Naive thymus-derived CD4-positive, alpha-beta T cell (primary cell): ENCODE measurements at regions of chr2 and their contacts with region 1.

Region 1: GRCh38 chr2:12116228-12116750 is 369.9 kb downstream of the LPIN1 start:
- DNase-seq: no peak
- ATAC-seq: no peak
- H3K4me3 ChIP-seq: no peak overlapping the region
- H3K4me3 Mint-ChIP-seq: no peak overlapping the region
- H3K27ac ChIP-seq: no peak overlapping the region
- H3K27ac Mint-ChIP-seq: no peak overlapping the region
- H3K4me1 ChIP-seq: peaks cover 0 to 2% of the 10 kb centered on the region in 2 donors
- H3K4me1 Mint-ChIP-seq: peaks cover under 1 to 34% (median 27%) of the 10 kb centered on the region in 7 donors
- H3K27me3 ChIP-seq: no peaks in the 10 kb centered on the region
- H3K27me3 Mint-ChIP-seq: peaks cover 0 to 5% (median 0%) of the 10 kb centered on the region in 5 donors

Region 2: DNA sequence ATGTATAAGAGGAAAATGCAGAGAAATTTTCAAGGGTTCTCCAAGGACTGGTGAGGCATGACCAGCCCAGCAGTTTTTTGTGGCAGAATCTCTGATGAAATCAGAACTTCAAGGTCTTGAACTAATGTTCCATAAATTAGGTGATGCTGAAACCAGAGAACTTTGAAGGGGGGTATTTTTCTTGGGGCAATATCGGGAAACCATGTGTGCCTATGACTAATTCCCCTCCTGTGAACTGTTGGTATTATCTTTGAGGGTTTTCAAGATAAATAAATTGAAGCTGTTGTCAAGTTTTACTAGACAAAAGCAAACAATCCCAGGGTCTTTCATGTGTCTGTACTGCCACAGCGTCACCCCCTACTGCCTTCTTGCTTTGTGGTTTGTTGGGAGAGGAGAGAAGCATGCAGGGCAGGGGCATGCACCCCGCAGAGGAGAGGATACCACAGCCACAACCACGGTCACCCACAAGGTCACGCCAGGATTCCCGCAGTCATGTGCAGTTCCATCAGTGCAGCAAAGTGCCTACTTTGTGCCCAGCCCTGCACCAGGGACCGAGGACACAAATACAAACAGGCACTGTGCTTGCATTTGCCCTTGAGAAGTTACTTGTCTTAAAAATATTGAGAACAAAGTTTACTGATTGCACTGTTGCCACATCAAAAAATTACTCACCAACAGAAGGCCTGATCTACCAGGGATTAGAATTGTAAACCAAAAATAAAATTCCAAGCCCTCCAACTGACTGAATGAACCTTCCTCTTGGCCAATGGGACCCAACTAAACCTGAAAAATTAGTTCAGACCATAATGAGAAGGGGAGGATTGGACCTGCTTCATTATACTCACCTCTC is 187.1 kb after region 1 on chr2:
- CTCF ChIA-PET with region 1: no interaction called
- POLR2A ChIA-PET with region 1: no interaction called
- intact Hi-C with region 1: loop called in 1 of 2 experiments (anchors 10 kb)
- DNase-seq: peak in 1 of 9 donors; percentile 19
- ATAC-seq: peak; percentile 57
- H3K4me3 ChIP-seq: no peak overlapping the region
- H3K4me3 Mint-ChIP-seq: peak overlapping the region; percentile 20 to 65 (median 44)
- H3K27ac ChIP-seq: no peak overlapping the region
- H3K27ac Mint-ChIP-seq: peak overlapping the region in 7 of 9 donors; percentile 2 to 87 (median 73)
- H3K4me1 ChIP-seq: peaks cover 7 to 34% of the 10 kb centered on the region in 2 donors
- H3K4me1 Mint-ChIP-seq: peaks cover 5 to 51% (median 38%) of the 10 kb centered on the region in 7 donors
- H3K27me3 ChIP-seq: no peaks in the 10 kb centered on the region
- H3K27me3 Mint-ChIP-seq: no peaks in the 10 kb centered on the region

Region 3: DNA sequence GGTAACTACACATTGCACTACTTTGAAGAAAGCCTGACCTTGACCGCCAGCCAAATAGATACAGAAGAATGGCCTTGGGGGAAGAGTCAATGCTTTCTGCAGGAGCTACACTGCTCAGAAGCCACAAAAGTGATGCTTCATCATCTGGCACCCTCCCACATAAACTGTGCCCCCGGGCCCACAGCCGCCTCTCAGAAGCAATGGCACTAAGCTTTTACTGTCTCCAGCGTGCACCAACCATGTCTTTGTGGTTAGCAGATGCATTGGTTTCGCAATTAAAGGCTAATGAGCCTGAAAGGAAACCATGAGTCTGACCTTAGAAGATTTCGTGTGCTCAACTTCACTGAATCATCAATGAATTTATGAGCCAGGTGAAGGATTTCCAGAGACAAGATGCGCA is 391.0 kb after region 1 on chr2:
- CTCF ChIA-PET with region 1: no interaction called
- POLR2A ChIA-PET with region 1: no interaction called
- intact Hi-C with region 1: loop called in 1 of 2 experiments (anchors 10 kb)
- DNase-seq: peak in 1 of 9 donors; percentile 70
- ATAC-seq: peak; percentile 78
- H3K4me3 ChIP-seq: peak overlapping the region; percentile 13
- H3K4me3 Mint-ChIP-seq: peak overlapping the region in 9 of 10 donors; percentile 21 to 72 (median 54)
- H3K27ac ChIP-seq: no peak overlapping the region
- H3K27ac Mint-ChIP-seq: peak overlapping the region in 8 of 9 donors; percentile 4 to 89 (median 34)
- H3K4me1 ChIP-seq: peaks cover 52 to 70% of the 10 kb centered on the region in 2 donors
- H3K4me1 Mint-ChIP-seq: peaks cover 54 to 100% (median 97%) of the 10 kb centered on the region in 7 donors
- H3K27me3 ChIP-seq: no peaks in the 10 kb centered on the region
- H3K27me3 Mint-ChIP-seq: no peaks in the 10 kb centered on the region